Right ventricle myocardium superior (tissue), 1 donor: ENCODE measurements at regions of chr11 and their contacts with region 1.

Region 1: DNA sequence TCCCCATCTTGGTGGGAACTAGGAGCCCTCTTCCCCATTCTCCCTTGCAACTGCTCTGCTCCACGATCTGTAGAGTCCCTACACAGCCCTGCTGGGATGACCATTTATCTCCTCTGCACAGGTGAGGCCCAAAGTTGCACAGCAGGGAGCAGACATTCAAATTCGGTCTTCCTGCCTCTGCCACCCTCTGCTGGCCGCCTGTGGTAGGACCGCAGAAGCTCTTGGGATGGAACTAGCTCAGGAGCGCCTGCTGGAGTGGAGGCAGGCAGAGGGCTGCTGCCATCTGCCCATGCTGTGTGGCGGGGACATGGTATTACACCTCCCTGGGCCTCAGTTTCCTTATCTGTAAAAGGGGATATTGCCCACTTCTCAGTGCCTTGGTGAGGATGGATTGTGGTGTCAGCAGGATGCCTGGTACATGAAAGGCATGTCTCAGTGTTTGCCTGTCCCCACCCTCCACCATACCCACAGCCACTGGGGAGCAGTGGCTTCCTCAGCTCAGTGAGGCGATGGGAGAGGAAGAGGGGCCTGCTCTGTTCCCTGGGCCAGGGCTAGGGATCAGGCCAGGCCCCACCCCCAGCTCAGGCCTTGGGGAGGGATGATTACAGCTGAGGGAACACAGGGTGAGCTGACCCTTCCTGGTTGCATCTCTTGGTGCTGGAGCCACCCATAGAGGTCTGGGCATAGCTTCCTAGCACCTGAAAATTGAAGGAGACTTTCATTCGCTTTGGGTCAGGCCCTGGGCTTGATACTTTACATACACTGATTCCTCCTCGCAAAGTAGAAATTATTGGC is 11.3 kb upstream of the OMP start:
- DNase-seq: peak; percentile 90
- ATAC-seq: peak; percentile 85

Region 2: GRCh38 chr11:77047007-77047927 is 44.1 kb before region 1 on chr11:
- intact Hi-C with region 1: loop called (anchors 2 kb)
- DNase-seq: no peak
- ATAC-seq: peak; percentile 96

Region 3: GRCh38 chr11:77066229-77067042 is 24.9 kb before region 1 on chr11 and contains the start of gene CAPN5:
- intact Hi-C with region 1: no loop called
- DNase-seq: peak; percentile 95
- ATAC-seq: peak; percentile 99
- total RNA-seq, gene CAPN5: 2.6 TPM

Region 4: GRCh38 chr11:77175869-77176539 is 84.7 kb after region 1 on chr11:
- intact Hi-C with region 1: no loop called
- DNase-seq: peak; percentile 77
- ATAC-seq: peak; percentile 80

Region 5: GRCh38 chr11:77361184-77361583 is 269.8 kb after region 1 on chr11:
- intact Hi-C with region 1: no loop called
- DNase-seq: no peak
- ATAC-seq: no peak